ENCODE measurements at regions of chr1 and their contacts with region 1.

Region 1: GRCh38 chr1:91712981-91713841 is 172.7 kb downstream of the TGFBR3 start:
- DNase-seq: peak; percentile 85
- H3K4me3 Mint-ChIP-seq: peak overlapping the region; percentile 55
- H3K27ac Mint-ChIP-seq: peak overlapping the region; percentile 88
- H3K4me1 Mint-ChIP-seq: peaks cover 35% of the 10 kb centered on the region
- H3K27me3 Mint-ChIP-seq: no peaks in the 10 kb centered on the region

Region 2: GRCh38 chr1:91124989-91125417 is 588.2 kb before region 1 on chr1:
- intact Hi-C with region 1: loop called (anchors 10 kb)
- DNase-seq: peak; percentile 57
- H3K4me3 Mint-ChIP-seq: no peak overlapping the region
- H3K27ac Mint-ChIP-seq: peak overlapping the region; percentile 85
- H3K4me1 Mint-ChIP-seq: peaks cover 12% of the 10 kb centered on the region
- H3K27me3 Mint-ChIP-seq: peaks cover 3% of the 10 kb centered on the region

Region 3: GRCh38 chr1:91591175-91591968 is 121.8 kb before region 1 on chr1:
- intact Hi-C with region 1: loop called (anchors 5 kb)
- DNase-seq: peak; percentile 66
- H3K4me3 Mint-ChIP-seq: peak overlapping the region; percentile 76
- H3K27ac Mint-ChIP-seq: peak overlapping the region; percentile 85
- H3K4me1 Mint-ChIP-seq: peaks cover 29% of the 10 kb centered on the region
- H3K27me3 Mint-ChIP-seq: peaks cover 2% of the 10 kb centered on the region

Region 4: DNA sequence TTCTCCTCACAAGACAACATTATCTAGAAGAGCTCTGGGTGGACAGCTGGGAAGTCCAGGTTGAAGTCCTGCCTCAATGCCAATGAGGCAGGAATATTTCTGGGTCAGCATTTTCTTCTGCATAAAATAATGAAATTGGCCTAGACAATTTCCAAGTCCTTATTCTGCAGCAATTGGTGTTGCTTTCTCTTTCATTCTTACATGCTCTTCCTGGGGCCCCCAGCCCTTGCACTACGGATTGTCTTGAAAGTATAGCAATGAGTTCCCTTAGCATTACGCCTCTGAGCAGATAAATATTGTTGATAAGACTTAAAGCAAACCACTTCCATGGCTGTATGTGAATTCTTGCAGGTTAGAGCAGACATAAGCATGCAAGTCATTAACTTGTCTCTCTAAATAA is 15.8 kb before region 1 on chr1:
- intact Hi-C with region 1: loop called (anchors 1 kb)
- DNase-seq: peak; percentile 90
- H3K4me3 Mint-ChIP-seq: peak overlapping the region; percentile 74
- H3K27ac Mint-ChIP-seq: peak overlapping the region; percentile 76
- H3K4me1 Mint-ChIP-seq: peaks cover 30% of the 10 kb centered on the region
- H3K27me3 Mint-ChIP-seq: no peaks in the 10 kb centered on the region

Region 5: GRCh38 chr1:91876040-91876470 is 162.8 kb after region 1 on chr1:
- intact Hi-C with region 1: loop called (anchors 1 kb)
- DNase-seq: no peak
- H3K4me3 Mint-ChIP-seq: peak overlapping the region; percentile 44
- H3K27ac Mint-ChIP-seq: peak overlapping the region; percentile 13
- H3K4me1 Mint-ChIP-seq: peaks cover 58% of the 10 kb centered on the region
- H3K27me3 Mint-ChIP-seq: peaks cover 12% of the 10 kb centered on the region